ENCODE measurements at regions of chr6 and their contacts with region 1.

Region 1: GRCh38 chr6:28737750-28738395 is 185.9 kb downstream of the TRIM27 start:
- DNase-seq: no peak
- ATAC-seq: no peak
- H3K4me3 Mint-ChIP-seq: peak overlapping the region; percentile 11
- H3K27ac Mint-ChIP-seq: no peak overlapping the region
- H3K4me1 Mint-ChIP-seq: peaks cover 5% of the 10 kb centered on the region
- H3K27me3 Mint-ChIP-seq: peaks cover 62% of the 10 kb centered on the region

Region 2: GRCh38 chr6:28580475-28580874 is 157.4 kb before region 1 on chr6:
- CTCF ChIA-PET with region 1: no interaction called
- POLR2A ChIA-PET with region 1: no interaction called
- intact Hi-C with region 1: no loop called
- DNase-seq: no peak
- ATAC-seq: no peak
- H3K4me3 Mint-ChIP-seq: no peak overlapping the region
- H3K27ac Mint-ChIP-seq: no peak overlapping the region
- H3K4me1 Mint-ChIP-seq: no peaks in the 10 kb centered on the region
- H3K27me3 Mint-ChIP-seq: peaks cover 22% of the 10 kb centered on the region

Region 3: DNA sequence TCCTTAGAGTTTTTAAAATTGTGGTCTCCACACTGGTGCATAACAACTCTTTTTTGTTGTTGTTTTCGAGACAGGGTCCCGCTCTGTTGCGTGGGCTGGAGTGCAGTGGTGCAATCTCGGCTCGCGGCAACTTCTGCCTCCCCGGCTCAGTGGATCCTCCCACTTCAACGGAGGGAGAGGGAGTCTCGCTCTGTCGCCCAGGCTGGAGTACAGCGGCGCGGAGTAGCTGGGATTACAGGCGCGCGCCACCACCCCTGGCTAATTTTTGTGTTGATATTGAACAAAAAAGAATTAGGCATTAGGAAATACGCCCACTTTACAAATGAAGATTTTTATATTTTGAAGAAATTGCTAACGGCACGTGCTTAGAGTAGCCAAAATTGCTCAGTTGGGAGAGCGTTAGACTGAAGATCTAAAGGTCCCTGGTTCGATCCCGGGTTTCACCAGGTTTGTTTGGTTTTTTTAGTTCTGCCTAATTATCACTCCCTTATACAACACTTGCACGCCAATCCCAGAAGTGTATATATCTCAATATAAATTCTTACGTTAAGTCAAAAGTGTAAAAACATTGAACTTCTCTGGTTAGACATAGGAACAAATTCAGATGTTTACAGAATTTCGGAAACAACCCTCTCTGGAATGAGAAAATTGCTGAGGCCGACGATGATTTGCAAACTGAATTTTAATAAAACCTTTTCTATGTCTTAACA is 26.3 kb after region 1 on chr6:
- CTCF ChIA-PET with region 1: no interaction called
- POLR2A ChIA-PET with region 1: no interaction called
- intact Hi-C with region 1: no loop called
- DNase-seq: no peak
- ATAC-seq: no peak
- H3K4me3 Mint-ChIP-seq: no peak overlapping the region
- H3K27ac Mint-ChIP-seq: no peak overlapping the region
- H3K4me1 Mint-ChIP-seq: no peaks in the 10 kb centered on the region
- H3K27me3 Mint-ChIP-seq: peaks cover 73% of the 10 kb centered on the region

Region 4: GRCh38 chr6:28807682-28808280 is 69.9 kb after region 1 on chr6:
- CTCF ChIA-PET with region 1: no interaction called
- POLR2A ChIA-PET with region 1: no interaction called
- intact Hi-C with region 1: loop called in 1 of 2 experiments (anchors 2 kb)
- DNase-seq: peak; percentile 60
- ATAC-seq: peak; percentile 51
- H3K4me3 Mint-ChIP-seq: peak overlapping the region; percentile 18
- H3K27ac Mint-ChIP-seq: no peak overlapping the region
- H3K4me1 Mint-ChIP-seq: peaks cover 5% of the 10 kb centered on the region
- H3K27me3 Mint-ChIP-seq: peaks cover 75% of the 10 kb centered on the region